Activated T-helper 2 cell treated with anti-CD3 and anti-CD28 coated beads, Interferon-gamma antibody, Interleukin-2, Interleukin-4, amounts not matched to agents 10 μg/mL and 5 μg/mL and 100 μg/mL, durations not matched to agents 14 hours and 24 hours and 36 hours (primary cell): ENCODE measurements at regions of chr17 and their contacts with region 1.

Region 1: DNA sequence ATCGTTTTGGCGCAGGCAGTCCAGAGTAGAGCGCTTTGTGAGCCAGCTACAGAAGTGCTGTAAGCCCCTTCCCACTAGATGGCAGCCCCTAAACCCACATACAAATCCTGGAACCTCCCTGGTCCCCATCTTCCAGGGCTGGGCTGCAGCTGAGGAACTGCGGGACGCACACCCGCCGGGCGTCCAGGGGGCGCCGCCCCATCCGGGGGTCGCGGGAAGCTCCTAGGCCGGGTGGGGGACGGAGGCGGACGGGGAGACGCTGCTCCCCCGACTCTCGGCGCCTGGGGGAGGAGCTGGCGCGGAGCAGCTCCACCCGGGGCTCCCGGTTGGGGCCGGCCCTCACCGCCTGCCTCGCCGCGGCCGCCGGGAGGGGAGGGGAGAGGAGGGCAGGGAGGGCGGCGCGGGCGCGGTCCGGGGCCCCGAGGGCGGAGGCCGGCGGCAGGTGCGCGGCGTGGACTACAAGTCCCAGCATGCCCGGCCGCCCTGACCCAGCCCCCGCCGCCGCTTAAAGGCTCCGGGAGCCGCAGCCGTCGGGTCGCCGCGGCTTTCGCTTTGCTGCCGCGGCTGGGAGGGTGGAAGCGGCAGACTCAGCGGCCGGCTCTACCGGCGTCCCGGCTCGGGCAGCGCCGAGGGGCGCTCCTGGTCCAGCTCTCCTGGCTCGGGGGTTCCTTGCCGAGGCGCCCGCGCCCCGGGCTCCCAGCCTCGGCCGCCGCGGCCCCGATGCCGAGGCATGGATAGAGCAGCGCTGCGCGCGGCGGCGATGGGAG is at the start of gene KSR1:
- DNase-seq: peak; percentile 77
- H3K4me3 Mint-ChIP-seq: peak within 1 kb of the TSS; percentile 95
- H3K27ac Mint-ChIP-seq: peak within 1 kb of the TSS; percentile 57
- H3K4me1 Mint-ChIP-seq: peaks cover 35% of the 10 kb centered on the region
- H3K27me3 Mint-ChIP-seq: peaks cover 11% of the 10 kb centered on the region
- total RNA-seq, gene KSR1: 96.5 and 101 TPM in 2 replicates

Region 2: GRCh38 chr17:27381007-27381501 is 75.0 kb before region 1 on chr17:
- intact Hi-C with region 1: loop called (anchors 10 kb)
- DNase-seq: peak; percentile 69
- H3K4me3 Mint-ChIP-seq: no peak overlapping the region
- H3K27ac Mint-ChIP-seq: no peak overlapping the region
- H3K4me1 Mint-ChIP-seq: peaks cover 6% of the 10 kb centered on the region
- H3K27me3 Mint-ChIP-seq: peaks cover 17% of the 10 kb centered on the region